ENCODE measurements at regions of chr2 and their contacts with region 1.

Region 1: DNA sequence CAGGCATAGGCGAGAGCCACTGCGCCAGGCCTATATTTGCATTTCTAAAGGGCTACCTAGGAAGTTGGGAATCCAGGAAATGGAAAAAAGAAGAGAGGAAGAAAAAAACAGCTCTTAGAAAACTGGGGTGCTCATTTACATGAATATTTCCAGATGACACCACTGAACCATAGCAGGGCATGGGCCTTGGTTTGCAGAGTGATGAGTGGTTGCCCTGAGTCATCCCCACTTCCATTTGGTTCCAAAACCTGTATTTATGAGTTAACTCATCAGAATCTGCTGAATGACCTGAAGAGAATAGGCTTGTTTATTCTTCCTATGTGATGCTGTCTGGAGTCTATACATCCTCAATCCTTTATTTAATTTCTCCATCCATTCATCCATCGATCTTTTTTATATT is 36.2 kb downstream of the EHD3 start:
- DNase-seq: no peak
- H3K4me3 ChIP-seq: no peak overlapping the region
- H3K27ac ChIP-seq: no peak overlapping the region
- H3K4me1 ChIP-seq: peaks cover 10% of the 10 kb centered on the region
- H3K27me3 ChIP-seq: no peaks in the 10 kb centered on the region
- CTCF ChIP-seq: no peak

Region 2: DNA sequence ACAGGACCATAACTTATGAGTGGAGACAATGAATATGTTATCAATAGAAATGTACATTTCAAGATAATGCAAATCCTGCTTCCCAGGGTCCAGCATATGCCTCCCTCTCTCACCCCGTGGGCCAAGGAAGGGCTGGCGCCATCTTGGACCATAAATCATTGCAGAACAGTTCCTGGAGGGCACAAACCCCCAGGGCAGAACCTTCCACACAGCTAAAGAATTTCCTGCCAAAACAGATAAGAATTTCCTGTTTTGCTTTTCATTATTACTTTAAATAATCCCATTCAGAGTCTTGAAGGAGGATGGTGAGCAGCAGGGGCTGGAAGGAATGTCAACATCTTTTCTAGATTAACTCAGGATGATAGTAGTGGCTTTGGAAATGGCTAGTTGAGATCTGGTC is 17.5 kb after region 1 on chr2:
- CTCF ChIA-PET with region 1: no interaction called
- POLR2A ChIA-PET with region 1: interaction called, 20 read pairs
- intact Hi-C with region 1: no loop called
- DNase-seq: peak; percentile 92
- H3K4me3 ChIP-seq: no peak overlapping the region
- H3K27ac ChIP-seq: peak overlapping the region; percentile 68
- H3K4me1 ChIP-seq: peaks cover 32% of the 10 kb centered on the region
- H3K27me3 ChIP-seq: no peaks in the 10 kb centered on the region
- CTCF ChIP-seq: no peak

Measured in A673 (cell line).